PC-9 (cell line): ENCODE measurements at regions of chr2 and their contacts with region 1.

Region 1: GRCh38 chr2:47250630-47251403 is 95.7 kb upstream of the STPG4 start:
- DNase-seq: peak; percentile 95 to 99
- H3K4me3 ChIP-seq: peak overlapping the region; percentile 32; the same call in 1 of the 2 replicates
- H3K27ac ChIP-seq: peak overlapping the region; percentile 86
- H3K4me1 ChIP-seq: peaks cover 39% of the 10 kb centered on the region
- H3K27me3 ChIP-seq: no peaks in the 10 kb centered on the region
- CTCF ChIP-seq: no peak

Region 2: DNA sequence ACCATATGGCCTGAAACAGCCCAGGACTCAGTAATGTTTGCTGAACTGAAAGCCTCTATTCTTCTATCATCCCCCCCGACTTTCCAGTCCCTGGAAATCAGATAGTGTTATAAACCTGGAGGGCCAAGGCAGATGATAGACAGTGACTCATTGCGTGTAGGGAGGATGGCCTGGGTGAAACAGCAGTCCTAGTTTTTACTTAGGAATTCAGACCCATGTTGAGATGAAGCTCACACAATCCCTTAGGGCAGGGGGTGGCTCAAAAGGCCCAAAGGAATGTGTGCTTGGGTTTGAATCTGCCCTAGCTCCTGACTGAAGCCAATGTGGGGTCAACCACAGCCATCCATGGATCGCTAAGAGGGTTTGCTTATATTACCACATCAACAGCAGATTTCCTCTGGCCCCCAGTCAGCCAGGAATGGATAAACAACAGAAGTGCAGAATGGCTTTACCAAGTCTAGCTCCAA is 51.8 kb before region 1 on chr2:
- CTCF ChIA-PET with region 1: no interaction called
- POLR2A ChIA-PET with region 1: interaction called, 3 read pairs
- intact Hi-C with region 1: loop called (anchors 2 kb)
- DNase-seq: peak; percentile 85 to 99
- H3K4me3 ChIP-seq: no peak overlapping the region
- H3K27ac ChIP-seq: peak overlapping the region; percentile 69
- H3K4me1 ChIP-seq: peaks cover 81% of the 10 kb centered on the region
- H3K27me3 ChIP-seq: no peaks in the 10 kb centered on the region
- CTCF ChIP-seq: no peak

Region 3: DNA sequence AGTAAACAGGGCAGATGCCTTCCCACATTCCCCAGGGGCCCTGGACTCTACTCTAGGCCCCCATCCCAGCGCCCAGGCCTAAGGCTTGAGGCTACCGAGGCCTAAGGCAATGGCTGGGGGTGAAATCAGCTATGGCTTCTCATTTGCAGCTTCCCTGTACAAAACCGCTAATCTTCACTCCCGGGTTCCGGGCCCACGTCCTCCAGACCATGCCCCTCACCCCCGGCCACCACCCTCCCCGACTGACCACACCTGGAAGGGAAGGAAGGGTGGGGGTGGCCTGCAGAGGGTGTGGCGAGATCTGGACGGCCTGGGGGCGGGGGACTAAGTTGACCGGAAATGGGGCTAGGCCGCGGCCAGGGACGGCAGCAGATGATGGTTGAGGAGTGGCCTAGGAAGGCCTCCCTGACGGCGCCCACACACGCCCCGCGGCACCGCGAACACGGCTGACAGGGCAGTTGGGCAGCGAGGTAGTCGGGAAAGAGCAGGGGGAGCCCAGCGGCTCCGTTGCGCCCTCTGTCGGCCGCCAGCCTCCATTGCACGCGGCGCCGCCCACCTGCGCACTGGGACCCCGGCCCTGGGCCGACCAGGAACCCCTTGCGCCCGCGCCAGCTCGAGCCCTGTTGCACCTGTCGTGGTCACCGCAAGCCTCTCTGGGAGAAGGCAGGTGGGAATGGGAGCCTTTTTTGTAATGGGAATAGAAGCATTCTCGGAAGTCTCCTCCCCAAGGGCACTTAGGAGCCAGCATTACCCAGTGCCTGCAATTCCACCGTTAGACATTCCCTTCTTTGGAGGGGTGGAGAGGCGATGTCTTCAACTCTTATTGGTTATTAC is 21.4 kb after region 1 on chr2:
- CTCF ChIA-PET with region 1: interaction called, 7 read pairs
- POLR2A ChIA-PET with region 1: no interaction called
- intact Hi-C with region 1: loop called (anchors 1 kb)
- DNase-seq: peak; percentile 79 to 92
- H3K4me3 ChIP-seq: peak overlapping the region; percentile 56; the same call in 1 of the 2 replicates
- H3K27ac ChIP-seq: peak overlapping the region; percentile 99
- H3K4me1 ChIP-seq: peaks cover 62% of the 10 kb centered on the region
- H3K27me3 ChIP-seq: no peaks in the 10 kb centered on the region
- CTCF ChIP-seq: peak; percentile 100

Region 4: DNA sequence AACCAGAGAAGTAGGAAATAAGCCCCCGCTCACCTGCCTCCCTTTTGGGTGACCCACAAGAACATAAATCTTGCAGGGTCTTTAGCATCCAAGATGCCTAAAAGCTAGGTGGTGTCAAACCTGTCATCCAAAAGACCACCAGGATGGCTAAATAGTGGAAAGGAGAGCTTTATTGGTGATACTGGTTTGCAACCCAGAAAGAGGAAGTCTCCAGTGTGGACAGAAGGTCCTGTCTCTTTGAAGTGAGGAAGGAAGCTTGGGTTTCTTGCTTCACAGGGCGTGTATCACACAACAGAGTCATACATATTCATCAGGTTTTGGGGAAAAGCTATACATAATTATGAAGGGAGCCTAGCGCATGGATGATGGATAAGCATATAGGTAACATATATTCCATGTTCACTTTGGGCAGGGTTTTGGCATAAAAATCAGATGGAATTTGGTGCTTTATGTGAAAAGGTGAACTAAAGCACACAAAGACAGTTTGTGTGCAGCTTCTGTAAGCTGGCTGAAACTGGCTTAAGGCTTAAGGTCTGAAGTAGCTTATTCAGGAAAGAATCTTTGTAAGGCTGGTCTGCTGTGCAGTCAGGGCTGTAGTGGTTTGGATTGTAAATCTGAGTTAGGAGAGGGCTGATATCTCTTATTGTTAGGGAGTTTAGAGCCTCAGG is 49.9 kb after region 1 on chr2:
- CTCF ChIA-PET with region 1: no interaction called
- POLR2A ChIA-PET with region 1: no interaction called
- intact Hi-C with region 1: no loop called
- DNase-seq: peak in 1 of 2 experiments; percentile 33
- H3K4me3 ChIP-seq: no peak overlapping the region
- H3K27ac ChIP-seq: no peak overlapping the region
- H3K4me1 ChIP-seq: peaks cover 33% of the 10 kb centered on the region
- H3K27me3 ChIP-seq: no peaks in the 10 kb centered on the region
- CTCF ChIP-seq: no peak